ENCODE measurements at regions of chr7 and their contacts with region 1.

Region 1: DNA sequence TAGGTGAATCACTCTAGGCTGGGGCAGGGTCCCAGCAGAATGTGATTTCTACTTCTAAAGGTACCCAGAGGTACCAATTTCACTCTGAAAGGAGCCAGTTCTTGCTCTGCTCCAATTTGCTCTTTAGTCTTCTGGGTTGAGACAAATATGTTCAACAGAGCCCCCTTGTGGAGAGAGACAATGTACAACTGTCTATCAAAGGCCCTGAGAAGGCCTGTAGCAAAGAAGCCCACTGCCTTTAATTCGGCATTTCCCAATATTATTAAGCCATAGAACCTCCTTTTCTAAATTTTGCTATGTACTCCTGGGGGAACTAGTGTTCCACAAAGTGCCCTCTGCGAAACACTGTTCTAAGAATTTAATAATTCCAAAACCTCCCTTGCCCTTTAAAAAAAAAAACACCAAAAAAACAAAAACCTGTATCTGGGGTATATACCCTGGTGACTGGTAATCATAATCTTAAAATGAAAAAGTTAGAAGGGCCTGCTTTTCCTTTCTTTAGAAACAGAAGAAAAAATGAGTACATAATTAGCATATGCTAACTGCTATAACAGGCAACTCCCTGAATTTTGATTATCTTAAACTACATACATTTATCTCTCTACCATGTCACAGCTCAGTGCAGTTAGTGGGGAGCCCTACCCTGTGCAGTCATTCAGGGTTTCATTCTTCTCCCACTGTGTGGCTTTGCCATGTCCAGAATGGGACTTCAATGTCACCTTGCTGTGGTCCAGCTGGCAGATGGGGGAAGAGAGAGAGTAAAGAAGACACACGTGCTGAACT is 160.9 kb upstream of the BMPER start:
- DNase-seq: no peak
- ATAC-seq: peak; percentile 82
- H3K4me3 ChIP-seq: no peak overlapping the region
- H3K27ac ChIP-seq: no peak overlapping the region
- H3K4me1 ChIP-seq: no peaks in the 10 kb centered on the region
- H3K27me3 ChIP-seq: no peaks in the 10 kb centered on the region; a peak in 1 of 4 replicates
- CTCF ChIP-seq: peak; percentile 27 to 47 (median 32); a peak in 4 of 6 replicates
- EP300 ChIP-seq: no peak
- POLR2A ChIP-seq: no peak
- RAD21 ChIP-seq: peak; percentile 60

Region 2: GRCh38 chr7:33185786-33186185 is 558.7 kb before region 1 on chr7:
- CTCF ChIA-PET with region 1: interaction called, 7 read pairs
- POLR2A ChIA-PET with region 1: no interaction called
- RAD21 ChIA-PET with region 1: interaction called, 4 read pairs
- SMC1A ChIA-PET with region 1: no interaction called
- in situ Hi-C with region 1: no loop called
- intact Hi-C with region 1: loop called (anchors 5 kb)
- DNase-seq: no peak
- ATAC-seq: peak; percentile 84
- H3K4me3 ChIP-seq: no peak overlapping the region
- H3K27ac ChIP-seq: no peak overlapping the region
- H3K4me1 ChIP-seq: no peaks in the 10 kb centered on the region
- H3K27me3 ChIP-seq: no peaks in the 10 kb centered on the region
- CTCF ChIP-seq: peak; percentile 51 to 85 (median 66); a peak in 4 of 6 replicates
- EP300 ChIP-seq: no peak
- POLR2A ChIP-seq: no peak
- RAD21 ChIP-seq: peak; percentile 80

Region 3: DNA sequence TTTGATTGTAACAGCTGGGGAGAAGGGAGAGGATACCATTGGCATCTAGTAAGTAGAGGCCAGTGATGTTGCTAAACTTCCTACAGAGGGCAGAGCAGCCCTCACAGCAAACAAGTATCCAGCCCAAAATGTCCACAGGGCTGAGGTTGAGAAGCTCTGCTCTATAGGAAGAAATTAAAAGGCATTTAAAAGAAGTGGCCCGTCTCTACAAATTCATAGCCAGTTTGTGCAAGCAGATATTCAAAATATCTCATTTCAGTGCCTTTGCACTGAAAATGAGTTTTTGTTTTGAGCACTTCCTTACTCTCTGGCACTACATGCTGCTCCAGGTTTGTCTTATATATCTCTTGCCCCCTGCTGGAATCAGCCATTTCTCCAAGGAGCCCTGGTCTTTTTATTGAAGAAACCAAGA is 285.1 kb before region 1 on chr7:
- CTCF ChIA-PET with region 1: interaction called, 12 read pairs
- POLR2A ChIA-PET with region 1: no interaction called
- RAD21 ChIA-PET with region 1: interaction called, 9 read pairs
- SMC1A ChIA-PET with region 1: interaction called, 4 read pairs
- in situ Hi-C with region 1: no loop called
- intact Hi-C with region 1: loop called (anchors 10 kb)
- DNase-seq: no peak
- ATAC-seq: peak; percentile 93
- H3K4me3 ChIP-seq: no peak overlapping the region
- H3K27ac ChIP-seq: no peak overlapping the region
- H3K4me1 ChIP-seq: no peaks in the 10 kb centered on the region
- H3K27me3 ChIP-seq: no peaks in the 10 kb centered on the region
- CTCF ChIP-seq: peak; percentile 30 to 58 (median 56); a peak in 5 of 6 replicates
- EP300 ChIP-seq: no peak
- POLR2A ChIP-seq: no peak
- RAD21 ChIP-seq: peak; percentile 69

Measured in GM12878 (cell line).